ENCODE measurements at regions of chr16 and their contacts with region 1.

Region 1: DNA sequence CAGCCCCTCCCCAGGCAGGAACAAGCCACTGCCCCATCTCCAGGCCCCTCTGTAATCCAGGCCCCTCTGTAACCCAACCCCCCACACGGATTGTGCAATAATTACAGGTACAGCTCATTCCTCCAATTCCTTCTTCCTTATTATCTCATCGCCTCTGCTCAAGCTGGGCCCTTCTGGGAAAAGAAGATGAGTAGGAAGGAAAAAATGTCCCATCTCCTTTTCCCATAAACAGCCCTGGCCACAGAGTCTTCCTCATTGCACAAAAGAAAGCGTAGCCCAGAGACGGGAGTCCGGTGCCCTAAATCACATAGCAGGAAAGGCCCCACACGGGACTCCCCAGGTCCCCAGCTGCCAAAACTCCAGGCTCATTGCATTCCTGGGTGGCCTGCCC is 3.6 kb upstream of the LITAFD start:
- DNase-seq: no peak
- ATAC-seq: no peak

Region 2: DNA sequence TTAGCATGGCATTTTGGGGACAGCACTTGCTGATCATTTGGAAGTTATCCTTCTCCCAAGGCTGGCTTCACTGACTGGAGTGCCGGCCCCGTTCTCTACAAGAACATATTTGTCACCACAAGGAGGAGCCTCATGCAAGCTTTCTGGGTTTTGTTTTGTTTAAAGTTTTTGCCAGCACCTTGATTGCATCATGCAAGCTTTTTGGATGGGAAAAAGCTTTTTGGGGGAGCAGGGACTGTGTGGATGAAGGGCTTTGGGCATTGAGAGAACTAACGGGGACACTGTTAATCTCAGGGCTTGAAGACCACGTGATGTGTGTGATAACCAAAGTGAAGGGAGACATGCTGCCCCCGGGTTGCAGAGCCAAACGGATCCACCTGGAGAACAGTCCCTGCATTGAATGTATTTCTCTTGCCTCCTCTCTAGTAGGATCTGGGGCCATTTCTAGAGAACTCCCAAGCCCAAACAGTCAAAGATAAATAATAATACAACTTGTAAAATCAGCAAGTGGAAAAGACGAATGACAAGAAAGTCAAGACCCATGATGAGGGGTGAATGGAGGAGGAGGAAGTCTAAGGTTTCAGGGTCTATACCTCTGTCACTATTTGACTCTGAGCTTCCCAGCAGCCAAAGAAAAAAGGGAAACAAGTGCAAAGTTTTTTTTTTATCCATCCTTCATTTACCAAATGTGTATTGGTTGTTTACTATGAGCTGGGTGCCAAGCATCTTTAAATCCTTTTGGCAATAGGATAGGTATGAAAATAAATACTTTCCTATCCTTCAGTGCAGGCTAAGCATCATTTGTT is 305.4 kb before region 1 on chr16:
- intact Hi-C with region 1: loop called (anchors 10 kb)
- DNase-seq: no peak
- ATAC-seq: no peak

Region 3: DNA sequence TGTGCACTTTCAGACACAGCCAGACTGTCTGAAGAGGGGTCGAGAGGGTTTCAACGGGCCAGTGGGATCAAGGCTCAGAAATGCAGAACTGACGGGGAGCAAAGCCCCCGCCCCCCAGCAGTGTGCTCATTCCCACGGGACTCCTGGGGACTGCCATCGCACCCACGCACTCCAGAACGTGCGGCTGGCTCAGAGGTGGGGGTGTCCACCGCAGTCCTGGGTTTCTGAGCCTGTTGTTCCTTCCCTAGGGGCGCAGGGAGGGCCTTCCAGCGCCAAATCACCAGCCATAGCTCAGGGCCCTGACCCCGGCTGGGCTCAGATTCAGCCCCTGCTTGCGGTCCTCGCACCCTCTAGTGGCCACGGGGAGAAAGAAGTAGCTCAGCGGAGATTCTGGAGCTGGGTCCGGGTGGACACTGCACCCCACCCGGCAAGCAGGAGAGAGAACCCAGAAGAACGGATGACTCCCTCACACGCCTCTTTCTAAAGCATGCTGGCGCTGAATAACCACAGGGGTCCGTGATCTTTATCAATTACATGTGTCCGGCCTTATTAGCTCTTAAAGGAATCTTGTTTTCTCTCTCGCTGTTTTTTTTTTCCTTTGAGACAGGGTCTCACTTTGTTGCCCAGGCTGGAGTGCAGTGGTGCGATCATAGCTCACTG is 130.2 kb after region 1 on chr16:
- intact Hi-C with region 1: no loop called
- DNase-seq: peak; percentile 80
- ATAC-seq: peak; percentile 96